Activated CD4-positive, alpha-beta memory T cell treated with anti-CD3 and anti-CD28 coated beads, Interleukin-2, amount 10 ng/mL, durations not matched to agents 7 days and 5 days (primary cell): ENCODE measurements at regions of chr14 and their contacts with region 1.

Region 1: GRCh38 chr14:94136575-94137331 is 7.3 kb upstream of the IFI27L2 start:
- DNase-seq: peak; percentile 89
- H3K4me3 Mint-ChIP-seq: no peak overlapping the region
- H3K27ac Mint-ChIP-seq: no peak overlapping the region
- H3K4me1 Mint-ChIP-seq: peaks cover 15% of the 10 kb centered on the region
- H3K27me3 Mint-ChIP-seq: peaks cover 21% of the 10 kb centered on the region

Region 2: DNA sequence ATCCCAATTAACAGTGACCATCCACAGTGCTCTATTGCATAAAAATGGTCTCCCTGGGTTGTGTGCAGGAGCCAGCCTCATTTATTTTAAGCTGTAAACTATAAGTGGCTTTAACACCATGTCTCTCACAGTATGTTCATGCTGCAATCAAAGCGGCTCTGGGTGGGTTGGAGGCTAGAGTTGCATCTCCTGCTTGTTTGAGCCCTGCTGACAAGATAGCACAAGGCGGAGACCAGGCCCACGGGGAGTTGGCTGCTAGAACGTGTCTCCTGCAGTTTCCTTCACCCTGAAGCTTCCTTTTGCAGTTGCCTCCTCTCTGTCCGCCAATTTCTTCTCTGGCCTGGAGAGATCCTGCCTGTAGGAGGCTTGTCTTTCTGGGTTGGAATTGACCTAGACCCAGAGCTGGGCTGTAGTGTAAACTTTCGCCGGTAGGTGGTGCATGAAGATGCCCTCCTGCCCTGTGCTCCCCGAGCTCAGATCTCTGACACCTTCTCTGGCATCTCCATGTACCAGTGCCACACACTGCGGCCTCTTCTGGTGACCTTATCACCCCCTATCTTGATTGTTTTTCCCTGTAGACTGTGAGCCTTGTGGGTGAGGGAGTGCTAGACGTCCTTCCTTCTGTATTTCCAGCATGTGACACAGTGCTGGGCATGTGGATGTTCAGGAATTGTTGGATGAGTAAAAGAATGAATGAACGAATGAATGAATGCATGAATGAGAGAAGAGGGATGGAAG is 100.3 kb before region 1 on chr14:
- CTCF ChIA-PET with region 1: interaction called, 178 read pairs
- POLR2A ChIA-PET with region 1: interaction called, 4 read pairs
- DNase-seq: peak; percentile 84
- H3K4me3 Mint-ChIP-seq: no peak overlapping the region
- H3K27ac Mint-ChIP-seq: no peak overlapping the region
- H3K4me1 Mint-ChIP-seq: peaks cover 9% of the 10 kb centered on the region
- H3K27me3 Mint-ChIP-seq: no peaks in the 10 kb centered on the region

Region 3: DNA sequence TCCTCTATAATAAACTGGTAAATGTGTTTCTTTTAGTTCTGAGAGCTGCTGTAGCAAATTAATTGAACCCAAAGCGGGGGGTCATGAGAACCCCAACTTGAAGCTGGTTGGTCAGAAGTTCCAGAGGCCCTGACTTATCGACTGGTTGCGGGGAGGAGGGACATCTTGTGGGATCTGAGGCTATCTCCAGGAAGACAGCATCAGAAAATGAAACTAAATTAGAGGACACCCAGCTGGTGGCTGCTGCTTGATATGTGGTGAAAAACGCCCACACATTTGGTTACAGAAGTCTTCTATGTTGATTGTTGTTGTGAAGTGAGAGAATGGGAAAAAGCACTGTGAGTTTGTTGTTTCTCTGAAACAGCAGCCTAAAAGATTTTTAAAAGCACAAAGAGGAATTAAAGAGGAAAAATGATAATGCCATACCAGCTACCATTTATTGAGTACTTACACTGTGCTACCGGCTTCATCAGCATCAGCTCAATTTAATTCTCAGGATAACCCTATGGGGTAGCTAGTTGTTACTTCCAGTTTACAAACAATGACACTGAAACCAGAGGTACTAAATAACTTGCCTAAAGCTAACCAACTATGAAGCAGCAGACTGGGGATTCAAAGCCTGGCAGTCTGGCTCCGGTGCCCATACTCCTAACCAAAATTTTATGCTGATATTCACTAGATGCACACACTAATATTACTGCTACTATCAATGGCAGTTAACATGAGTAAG is 80.0 kb before region 1 on chr14:
- CTCF ChIA-PET with region 1: interaction called, 29 read pairs
- POLR2A ChIA-PET with region 1: no interaction called
- DNase-seq: peak; percentile 56
- H3K4me3 Mint-ChIP-seq: peak overlapping the region; percentile 7
- H3K27ac Mint-ChIP-seq: peak overlapping the region; percentile 83
- H3K4me1 Mint-ChIP-seq: peaks cover 65% of the 10 kb centered on the region
- H3K27me3 Mint-ChIP-seq: no peaks in the 10 kb centered on the region

Region 4: GRCh38 chr14:94161981-94162380 is 25.2 kb after region 1 on chr14:
- CTCF ChIA-PET with region 1: interaction called, 35 read pairs
- POLR2A ChIA-PET with region 1: no interaction called
- DNase-seq: no peak
- H3K4me3 Mint-ChIP-seq: no peak overlapping the region
- H3K27ac Mint-ChIP-seq: peak overlapping the region; percentile 29
- H3K4me1 Mint-ChIP-seq: peaks cover 69% of the 10 kb centered on the region
- H3K27me3 Mint-ChIP-seq: no peaks in the 10 kb centered on the region

Region 5: DNA sequence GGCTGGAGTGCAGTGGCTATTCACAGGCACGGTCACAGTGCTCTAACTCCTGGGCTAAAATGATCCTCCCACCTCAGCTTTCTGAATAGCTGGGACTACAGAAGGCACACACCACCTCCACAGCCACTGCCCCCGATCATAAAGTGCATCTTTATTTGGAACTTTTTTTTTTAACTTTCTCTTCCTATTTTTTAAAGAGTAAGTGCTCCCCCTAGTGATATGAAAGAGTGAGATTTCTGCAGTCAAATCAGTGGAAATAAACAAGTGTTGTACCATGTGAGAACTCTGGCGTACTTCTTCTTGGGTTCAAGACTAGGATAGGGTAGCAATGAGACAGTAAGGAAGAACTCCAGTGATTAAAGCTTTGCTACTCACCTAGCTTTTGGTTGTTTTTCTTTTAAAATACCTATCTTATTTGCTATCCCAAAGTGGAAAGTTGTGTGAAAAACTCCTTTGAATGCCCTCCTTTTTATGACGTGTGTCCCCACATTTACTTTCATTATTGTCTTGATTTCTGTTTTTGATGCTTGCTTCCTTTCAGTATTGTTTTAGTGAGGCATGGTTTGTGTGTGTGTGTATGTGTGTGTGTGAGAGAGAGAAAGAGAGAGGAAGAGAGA is 44.0 kb after region 1 on chr14:
- CTCF ChIA-PET with region 1: interaction called, 76 read pairs
- POLR2A ChIA-PET with region 1: interaction called, 23 read pairs
- DNase-seq: no peak
- H3K4me3 Mint-ChIP-seq: peak overlapping the region; percentile 59
- H3K27ac Mint-ChIP-seq: peak overlapping the region; percentile 47
- H3K4me1 Mint-ChIP-seq: peaks cover 24% of the 10 kb centered on the region
- H3K27me3 Mint-ChIP-seq: peaks cover 10% of the 10 kb centered on the region

Region 6: DNA sequence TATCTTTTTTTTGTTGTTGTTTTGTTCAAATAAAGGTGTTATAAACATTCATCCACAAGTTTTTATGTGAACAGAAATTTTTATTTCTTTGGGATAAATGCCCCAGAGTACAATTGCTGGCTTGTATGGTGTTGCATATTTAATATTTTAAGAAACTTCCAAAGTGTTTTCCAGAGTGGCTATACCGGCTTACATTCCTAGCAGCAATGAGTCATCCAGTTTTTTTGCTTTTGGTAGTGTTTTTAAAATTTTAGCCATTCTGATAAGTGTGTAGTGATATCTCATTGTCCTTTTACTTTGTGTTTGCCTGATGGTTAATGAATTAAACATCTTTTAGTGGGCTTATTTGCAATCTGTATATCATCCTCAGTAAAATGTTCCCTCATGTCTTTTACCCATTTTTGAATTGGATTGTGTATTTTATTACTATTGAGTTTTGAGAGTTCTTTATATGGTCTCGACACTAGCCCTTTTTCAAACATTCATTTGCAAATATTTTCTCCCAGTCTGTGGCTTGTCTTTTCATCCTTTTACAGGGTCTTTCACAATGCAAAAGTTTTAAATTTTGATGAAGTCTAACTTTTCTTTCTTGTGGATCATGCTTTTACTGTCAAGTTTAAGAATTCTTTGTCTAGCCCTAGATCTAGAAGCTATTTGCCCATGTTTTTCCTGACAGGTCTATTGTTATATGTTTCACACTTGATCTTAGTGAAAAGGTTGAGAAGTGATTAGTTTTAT is 66.9 kb after region 1 on chr14:
- CTCF ChIA-PET with region 1: no interaction called
- POLR2A ChIA-PET with region 1: no interaction called
- DNase-seq: no peak
- H3K4me3 Mint-ChIP-seq: no peak overlapping the region
- H3K27ac Mint-ChIP-seq: no peak overlapping the region
- H3K4me1 Mint-ChIP-seq: no peaks in the 10 kb centered on the region
- H3K27me3 Mint-ChIP-seq: peaks cover 7% of the 10 kb centered on the region

Region 7: DNA sequence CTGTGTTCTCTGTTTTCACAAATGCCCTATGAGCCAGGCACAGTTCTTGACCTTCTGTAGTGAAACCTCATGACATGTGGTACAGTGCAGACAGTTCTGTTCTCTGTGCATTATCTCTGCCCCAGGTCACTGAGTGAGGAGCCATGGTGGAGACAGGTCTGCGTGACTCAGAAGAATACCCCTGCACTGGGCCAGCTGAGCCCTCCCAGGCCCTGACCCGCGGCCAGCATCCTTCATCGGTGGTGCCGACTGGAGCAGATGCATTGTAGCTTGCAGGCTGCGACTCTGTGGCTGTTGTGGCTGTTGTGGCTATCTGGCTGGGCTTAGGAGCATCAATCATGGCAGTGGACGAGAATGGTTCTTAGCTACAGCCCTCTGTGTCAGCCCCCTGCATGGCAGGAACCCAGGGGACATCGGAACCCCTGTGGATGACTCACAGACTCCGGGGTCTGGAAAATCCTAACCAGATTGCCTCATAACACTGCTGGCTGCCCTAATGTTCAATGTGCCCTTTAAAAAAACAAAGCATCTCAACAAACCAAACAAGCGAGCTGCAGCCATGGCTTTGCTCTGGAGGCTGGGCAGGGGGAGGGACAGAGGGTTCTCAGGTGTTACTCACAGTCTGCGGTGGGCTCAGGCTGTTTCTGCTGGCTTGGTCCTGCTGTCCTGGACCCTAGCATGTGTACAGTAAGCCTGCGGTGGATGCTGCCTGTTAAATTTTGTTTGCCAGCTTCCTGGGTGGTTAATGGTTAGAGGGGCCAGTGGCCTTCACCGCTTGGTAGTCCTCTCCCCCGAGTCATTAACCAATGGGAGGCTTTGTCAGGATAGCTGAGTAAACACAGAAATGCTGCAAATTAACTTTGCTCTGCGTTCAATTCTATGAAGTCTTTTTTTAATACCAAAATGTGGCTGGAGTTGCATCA is 186.2 kb after region 1 on chr14 and contains the start of gene SERPINA6:
- CTCF ChIA-PET with region 1: no interaction called
- POLR2A ChIA-PET with region 1: no interaction called
- DNase-seq: no peak
- H3K4me3 Mint-ChIP-seq: no peak within 1 kb of the TSS
- H3K27ac Mint-ChIP-seq: no peak within 1 kb of the TSS
- H3K4me1 Mint-ChIP-seq: no peaks in the 10 kb centered on the region
- H3K27me3 Mint-ChIP-seq: peaks cover 2% of the 10 kb centered on the region
- total RNA-seq, gene SERPINA6: not detected